GM23248 (cell line): ENCODE measurements at regions of chr2 and their contacts with region 1.

Region 1: GRCh38 chr2:177724398-177725287 is 332.1 kb downstream of the AGPS start:
- DNase-seq: peak; percentile 62
- H3K4me3 ChIP-seq: no peak overlapping the region
- H3K27ac ChIP-seq: no peak overlapping the region
- H3K4me1 ChIP-seq: no peaks in the 10 kb centered on the region
- H3K27me3 ChIP-seq: peaks cover 13% of the 10 kb centered on the region

Region 2: GRCh38 chr2:176110975-176111663 is 1613.5 kb before region 1 on chr2:
- in situ Hi-C with region 1: loop called (anchors 25 kb)
- DNase-seq: peak; percentile 92
- H3K4me3 ChIP-seq: peak overlapping the region; percentile 70
- H3K27ac ChIP-seq: peak overlapping the region; percentile 88
- H3K4me1 ChIP-seq: no peaks in the 10 kb centered on the region; the same call in 1 of the 2 replicates
- H3K27me3 ChIP-seq: no peaks in the 10 kb centered on the region

Region 3: DNA sequence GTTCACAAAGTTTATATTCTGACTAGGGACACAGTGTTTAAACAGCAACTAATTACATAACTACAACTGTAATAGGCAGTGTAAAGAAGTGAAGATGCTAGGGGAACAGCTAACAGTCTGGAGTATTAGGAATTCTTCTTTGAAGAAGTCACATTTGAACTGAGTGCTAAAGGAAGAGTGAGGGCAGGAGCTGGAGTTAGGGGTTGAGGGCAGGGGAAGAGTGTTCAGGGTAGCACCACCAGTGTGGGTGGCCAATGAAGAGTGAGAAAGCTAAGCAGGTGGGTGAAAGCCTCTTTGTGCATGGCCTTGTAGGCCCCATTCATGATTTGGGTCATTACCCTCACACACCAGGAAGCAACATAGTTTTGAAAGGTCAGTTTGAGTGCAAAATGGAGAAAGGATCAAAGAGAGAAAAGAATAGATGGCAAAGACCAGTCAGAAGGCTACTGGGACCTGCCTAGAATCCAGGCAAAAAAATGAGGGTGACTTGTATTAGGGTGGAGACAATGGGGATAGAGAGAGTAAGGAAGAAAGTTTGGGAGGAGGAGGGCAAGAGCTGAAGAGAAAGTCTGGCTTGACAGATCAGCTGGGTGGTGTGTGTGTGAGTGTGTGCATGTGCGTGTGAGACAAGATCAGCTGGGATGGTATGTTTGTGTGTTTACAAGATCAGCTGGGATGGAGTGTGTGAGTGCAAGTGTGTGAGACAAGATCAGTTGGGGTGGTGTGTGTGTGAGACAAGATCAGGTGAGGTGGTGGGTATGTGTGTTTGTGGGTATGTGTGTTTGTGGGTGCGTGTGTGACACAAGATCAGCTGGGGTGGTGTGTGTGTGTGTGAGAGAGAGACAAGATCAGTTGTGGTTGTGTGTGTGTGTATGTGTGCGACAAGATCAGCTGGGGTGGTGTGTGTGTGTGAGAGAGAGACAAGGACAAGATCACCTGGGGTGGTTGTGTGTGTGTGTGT is 375.6 kb before region 1 on chr2:
- in situ Hi-C with region 1: loop called (anchors 10 kb)
- DNase-seq: no peak
- H3K4me3 ChIP-seq: no peak overlapping the region
- H3K27ac ChIP-seq: no peak overlapping the region
- H3K4me1 ChIP-seq: peaks cover 12% of the 10 kb centered on the region; the same call in 1 of the 2 replicates
- H3K27me3 ChIP-seq: no peaks in the 10 kb centered on the region